Breast epithelium (tissue), 4 donors: ENCODE measurements at regions of chr10 and their contacts with region 1.

Region 1: DNA sequence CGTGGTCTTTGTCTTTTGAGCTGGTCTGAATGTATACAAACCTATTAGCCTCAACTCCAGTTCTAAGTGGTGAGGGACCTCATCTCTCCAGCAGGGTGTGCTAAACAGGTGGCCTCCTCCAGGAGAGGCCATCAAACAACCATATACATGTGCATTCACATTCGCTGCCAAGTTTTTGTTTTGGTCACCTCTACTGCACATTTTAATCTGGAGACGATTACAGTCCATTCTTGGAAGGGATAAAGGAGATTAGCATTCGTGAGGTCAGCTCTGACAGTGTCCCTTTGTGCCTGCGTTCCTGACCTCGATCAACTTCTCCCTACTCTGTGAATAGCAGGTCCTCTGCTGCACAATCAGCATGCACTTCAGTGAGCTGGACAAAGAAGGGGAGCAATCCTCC is 60.8 kb downstream of the RHOBTB1 start:
- DNase-seq: no peak
- H3K4me3 ChIP-seq: no peak overlapping the region
- H3K27ac ChIP-seq: no peak overlapping the region
- H3K4me1 ChIP-seq: no peaks in the 10 kb centered on the region
- H3K27me3 ChIP-seq: no peaks in the 10 kb centered on the region
- CTCF ChIP-seq: peak in 1 of 3 donors; percentile 28
- POLR2A ChIP-seq: no peak

Region 2: DNA sequence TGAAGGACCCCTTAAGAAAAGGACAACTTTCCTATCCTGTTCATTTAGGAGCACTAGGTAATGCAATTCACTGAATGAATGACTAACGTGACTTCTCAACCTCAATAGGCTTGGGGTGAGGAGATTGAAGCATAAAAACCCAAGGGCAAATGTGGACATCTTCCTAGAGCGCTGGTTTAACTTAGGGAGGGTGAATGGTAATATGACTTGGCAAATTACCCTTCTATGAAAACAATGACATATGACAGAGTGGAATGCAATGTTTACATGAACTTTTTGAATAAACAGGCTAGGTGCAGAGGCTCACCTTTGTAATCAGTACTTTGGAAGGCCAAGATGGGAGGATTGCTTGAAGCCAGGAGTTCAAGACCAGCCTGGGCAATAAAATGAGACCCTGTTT is 409.6 kb before region 1 on chr10:
- intact Hi-C with region 1: loop called (anchors 5 kb)
- DNase-seq: no peak
- H3K4me3 ChIP-seq: no peak overlapping the region
- H3K27ac ChIP-seq: no peak overlapping the region
- H3K4me1 ChIP-seq: no peaks in the 10 kb centered on the region
- H3K27me3 ChIP-seq: no peaks in the 10 kb centered on the region
- CTCF ChIP-seq: no peak
- POLR2A ChIP-seq: no peak

Region 3: DNA sequence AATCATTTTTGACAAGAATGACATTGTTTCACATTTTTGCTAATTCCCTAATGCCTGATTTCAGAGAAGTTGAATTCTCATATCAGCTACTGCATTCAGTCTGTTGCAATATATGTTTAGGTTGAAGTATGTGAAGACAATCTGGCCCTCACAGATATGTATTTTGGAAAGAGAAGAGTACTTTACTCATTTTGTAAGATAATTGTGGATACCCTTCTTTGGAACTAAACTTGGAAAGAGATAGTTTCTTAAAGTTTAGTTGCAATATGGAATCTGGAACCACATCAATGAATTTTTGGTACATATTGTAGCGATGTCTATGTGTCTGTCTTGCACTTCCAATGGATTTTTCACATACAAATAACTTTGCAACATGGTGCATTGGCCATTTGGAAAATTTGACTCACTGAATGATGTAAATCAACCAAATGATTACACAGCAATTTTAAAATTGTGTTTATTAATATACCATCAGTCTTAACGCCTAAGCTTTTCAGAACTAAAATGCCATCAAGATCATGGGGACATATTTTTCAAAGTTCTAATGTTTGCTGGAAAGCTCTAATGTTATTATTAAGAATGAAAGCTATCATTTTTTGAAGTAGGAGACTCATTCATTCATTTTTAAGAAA is 609.3 kb after region 1 on chr10:
- intact Hi-C with region 1: loop called (anchors 5 kb)
- DNase-seq: no peak
- H3K4me3 ChIP-seq: no peak overlapping the region
- H3K27ac ChIP-seq: no peak overlapping the region
- H3K4me1 ChIP-seq: no peaks in the 10 kb centered on the region
- H3K27me3 ChIP-seq: no peaks in the 10 kb centered on the region
- CTCF ChIP-seq: no peak
- POLR2A ChIP-seq: no peak

Region 4: DNA sequence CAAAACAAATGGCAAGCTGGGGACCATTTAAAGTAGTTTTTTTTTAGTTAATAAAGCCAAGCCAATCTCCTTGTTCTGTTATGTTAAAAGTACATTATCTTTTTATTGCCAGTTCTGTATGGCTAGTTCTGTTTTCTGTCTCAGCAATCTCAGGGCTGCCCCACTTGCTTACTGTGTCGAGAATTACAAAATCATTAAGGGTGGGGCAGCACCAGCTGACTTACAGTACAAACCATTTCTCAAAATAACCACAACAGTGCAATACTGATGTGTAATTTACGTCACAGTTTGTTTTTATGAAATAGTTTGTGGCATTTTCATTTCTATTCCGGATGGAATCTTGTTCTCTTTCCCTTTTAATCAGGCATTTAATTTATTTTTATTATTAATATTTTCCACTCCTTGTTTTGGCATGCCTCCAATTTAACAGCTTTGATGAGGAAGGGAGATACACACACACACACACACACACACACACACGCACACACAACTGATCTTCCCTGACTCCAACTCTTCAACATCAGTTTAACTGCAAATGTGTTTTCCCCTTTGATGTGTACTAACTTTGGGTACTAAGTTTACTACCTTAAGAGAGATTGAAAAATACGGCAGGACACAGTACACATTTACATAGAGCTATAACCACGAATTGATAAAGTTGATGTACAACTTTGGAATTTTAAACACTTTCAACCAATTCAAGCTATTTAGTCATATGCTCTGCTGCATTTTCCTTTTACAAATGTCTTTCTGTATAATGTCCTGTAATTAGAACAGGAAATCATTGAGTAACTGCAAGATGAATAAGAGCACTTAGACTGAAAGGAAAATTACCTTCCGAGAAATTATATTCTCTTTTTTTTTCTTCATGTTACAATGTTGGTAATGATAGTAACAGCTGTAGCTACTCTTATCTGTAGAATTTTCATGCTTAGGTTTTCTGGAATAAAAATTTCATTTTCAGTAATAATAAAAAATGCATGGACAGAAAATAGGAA is 1109.8 kb after region 1 on chr10:
- intact Hi-C with region 1: no loop called
- DNase-seq: peak in 1 of 2 donors; percentile 57
- H3K4me3 ChIP-seq: peak overlapping the region; percentile 1 to 52 (median 14)
- H3K27ac ChIP-seq: peak overlapping the region; percentile 75 to 91
- H3K4me1 ChIP-seq: peaks cover 3 to 4% of the 10 kb centered on the region in 2 donors
- H3K27me3 ChIP-seq: no peaks in the 10 kb centered on the region
- CTCF ChIP-seq: no peak
- POLR2A ChIP-seq: no peak